HEK293 (cell line): ENCODE measurements at regions of chr4 and their contacts with region 1.

Region 1: GRCh38 chr4:25180524-25181131 is 20.4 kb upstream of the SEPSECS start:
- H3K4me3 ChIP-seq: no peak overlapping the region
- H3K27ac ChIP-seq: no peak overlapping the region
- H3K4me1 ChIP-seq: no peaks in the 10 kb centered on the region
- CTCF ChIP-seq: no peak

Region 2: GRCh38 chr4:23966725-23967124 is 1213.9 kb before region 1 on chr4:
- CTCF ChIA-PET with region 1: no interaction called
- POLR2A ChIA-PET with region 1: no interaction called
- H3K4me3 ChIP-seq: no peak overlapping the region
- H3K27ac ChIP-seq: no peak overlapping the region
- H3K4me1 ChIP-seq: no peaks in the 10 kb centered on the region
- CTCF ChIP-seq: no peak

Region 3: DNA sequence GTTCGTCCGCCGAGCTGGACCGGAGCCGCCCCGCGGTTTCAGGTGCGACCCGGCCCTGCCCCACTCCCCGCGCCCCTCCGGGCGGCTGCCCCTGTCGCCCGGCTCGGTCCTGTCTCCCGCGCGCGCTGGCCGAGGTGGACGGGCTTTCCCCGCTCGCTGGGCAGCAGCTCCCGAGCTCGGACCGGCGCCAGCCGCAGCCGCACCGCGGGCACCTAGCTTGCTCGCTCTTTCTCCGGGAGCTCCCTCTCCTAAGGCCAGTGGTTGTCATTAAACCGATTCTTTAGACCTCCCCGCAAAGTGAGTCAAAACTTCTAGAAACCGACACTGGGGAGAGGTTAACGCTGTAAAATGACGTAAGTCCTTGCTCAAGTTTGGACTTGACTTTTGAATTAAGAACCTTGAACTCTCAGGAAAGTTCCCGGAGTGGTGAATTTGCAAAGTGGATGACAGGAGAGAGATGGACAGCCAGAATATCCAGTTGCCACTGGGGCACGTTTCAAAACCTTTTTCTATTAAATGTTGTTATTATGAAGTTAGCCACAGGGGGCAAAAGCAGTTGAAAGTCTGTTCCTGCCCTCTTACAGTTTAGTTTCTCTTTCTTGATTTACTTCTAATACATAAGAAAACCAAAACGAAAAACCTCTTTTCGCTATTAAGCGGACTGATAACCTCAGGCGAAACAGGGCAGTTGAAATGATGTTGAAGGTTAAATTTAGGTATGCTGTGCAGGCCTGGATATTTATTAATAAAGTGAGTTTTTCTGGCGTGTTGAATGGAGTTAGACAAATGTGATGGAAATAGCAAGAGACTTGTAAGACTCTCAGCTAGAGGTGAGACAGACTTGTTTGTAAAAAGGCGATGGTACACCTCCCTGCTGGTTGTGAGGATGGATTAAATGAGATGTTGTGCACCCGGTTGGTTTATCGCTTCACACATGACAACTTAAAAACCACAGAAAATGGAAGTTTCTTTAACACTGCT is 54.1 kb after region 1 on chr4:
- CTCF ChIA-PET with region 1: interaction called, 11 read pairs
- POLR2A ChIA-PET with region 1: no interaction called
- H3K4me3 ChIP-seq: peak overlapping the region; percentile 78
- H3K27ac ChIP-seq: peak overlapping the region; percentile 80
- H3K4me1 ChIP-seq: no peaks in the 10 kb centered on the region
- CTCF ChIP-seq: no peak

Region 4: GRCh38 chr4:25367004-25367621 is 186.5 kb after region 1 on chr4:
- CTCF ChIA-PET with region 1: interaction called, 19 read pairs
- POLR2A ChIA-PET with region 1: no interaction called
- H3K4me3 ChIP-seq: no peak overlapping the region
- H3K27ac ChIP-seq: no peak overlapping the region
- H3K4me1 ChIP-seq: no peaks in the 10 kb centered on the region; the same call in 1 of the 2 replicates
- CTCF ChIP-seq: no peak